ENCODE measurements at regions of chr7 and their contacts with region 1.

Region 1: DNA sequence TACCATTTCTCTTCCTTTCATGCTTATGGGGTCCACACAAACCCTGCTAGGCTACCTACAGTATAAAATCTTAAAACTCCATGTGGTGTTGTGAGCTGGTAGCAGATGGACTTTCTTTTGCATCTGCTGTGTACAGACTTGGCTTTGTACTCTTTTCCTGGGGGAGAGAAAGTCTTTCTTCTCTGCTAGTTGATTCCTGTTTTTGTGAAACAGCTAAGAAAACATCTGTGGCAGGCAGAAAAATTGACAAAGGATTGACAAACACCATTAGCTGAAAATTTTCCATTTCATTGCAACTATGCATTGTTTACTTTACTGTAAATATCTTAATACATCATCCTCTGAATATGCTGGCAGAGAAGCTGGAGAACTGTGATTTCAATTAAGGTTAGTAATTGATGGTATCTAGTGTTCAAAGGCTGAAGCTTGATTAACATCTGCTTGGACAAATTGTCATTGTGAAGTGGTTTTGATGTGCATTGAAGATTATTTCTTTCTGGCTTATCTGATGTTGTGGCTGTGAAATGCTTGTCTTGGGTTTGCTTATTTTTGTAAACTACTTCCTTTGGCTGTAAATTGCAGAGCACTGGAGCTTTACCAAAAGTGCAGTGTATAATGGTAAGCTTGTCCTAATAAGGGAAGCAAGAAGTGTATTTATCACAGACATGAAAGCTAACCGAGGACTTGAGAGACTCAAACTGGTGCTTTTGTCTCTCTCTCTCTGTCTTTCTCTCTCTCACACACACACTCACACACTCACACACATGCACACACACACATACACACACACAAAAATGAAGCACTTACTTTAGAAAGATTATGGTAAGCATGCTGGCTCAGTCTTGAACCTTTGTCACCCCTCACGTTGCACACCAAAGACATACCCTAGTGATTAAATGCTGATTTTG is at the start of gene FOXP2:
- DNase-seq: peak; percentile 39
- H3K4me3 ChIP-seq: peak within 1 kb of the TSS; percentile 24
- H3K27ac ChIP-seq: peak within 1 kb of the TSS; percentile 37
- H3K4me1 ChIP-seq: no peaks in the 10 kb centered on the region
- H3K27me3 ChIP-seq: no peaks in the 10 kb centered on the region
- CTCF ChIP-seq: no peak
- total RNA-seq, gene FOXP2: 5.3 to 20.0 TPM

Region 2: GRCh38 chr7:114085592-114086501 is 328.6 kb before region 1 on chr7:
- intact Hi-C with region 1: loop called (anchors 5 kb)
- DNase-seq: peak; percentile 95
- H3K4me3 ChIP-seq: peak overlapping the region; percentile 56
- H3K27ac ChIP-seq: peak overlapping the region; percentile 91
- H3K4me1 ChIP-seq: no peaks in the 10 kb centered on the region
- H3K27me3 ChIP-seq: no peaks in the 10 kb centered on the region
- CTCF ChIP-seq: no peak

Region 3: DNA sequence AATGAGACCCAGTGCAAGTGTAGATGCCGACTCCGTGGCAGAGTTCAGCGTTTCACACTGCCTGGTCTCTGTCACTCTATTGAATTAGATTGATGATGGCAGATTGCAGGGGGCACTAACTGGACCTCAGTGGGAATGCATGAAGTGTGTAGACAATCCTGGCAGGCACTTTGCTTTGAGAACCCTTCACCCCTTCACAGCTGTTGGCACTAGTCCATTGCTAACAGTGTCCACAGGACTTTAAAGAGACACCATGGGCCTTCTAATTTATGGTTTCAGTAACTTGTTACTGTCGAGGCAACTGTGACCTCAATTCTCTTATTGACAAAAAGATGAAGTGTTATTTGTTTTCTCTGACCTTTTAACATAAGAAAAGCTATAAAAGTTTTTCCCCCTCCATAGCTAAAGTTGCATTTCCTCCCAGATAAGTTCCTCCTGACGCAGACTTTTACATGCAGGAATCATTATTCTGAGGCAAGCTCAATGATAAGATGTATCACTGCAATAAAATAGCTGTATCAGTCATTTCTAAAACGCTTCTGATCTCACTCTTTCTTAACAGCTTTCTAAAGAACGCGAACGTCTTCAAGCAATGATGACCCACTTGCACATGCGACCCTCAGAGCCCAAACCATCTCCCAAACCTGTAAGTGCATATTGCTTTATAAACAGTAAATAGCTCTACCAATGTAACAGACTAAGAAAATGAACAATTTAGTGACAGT is 239.1 kb after region 1 on chr7:
- intact Hi-C with region 1: loop called (anchors 10 kb)
- DNase-seq: no peak
- H3K4me3 ChIP-seq: no peak overlapping the region
- H3K27ac ChIP-seq: no peak overlapping the region
- H3K4me1 ChIP-seq: no peaks in the 10 kb centered on the region
- H3K27me3 ChIP-seq: no peaks in the 10 kb centered on the region
- CTCF ChIP-seq: no peak